Dorsolateral prefrontal cortex (tissue), 120 donors: ENCODE measurements at regions of chrX and their contacts with region 1.

Region 1: GRCh38 chrX:44025555-44025954 is 52.4 kb upstream of the NDP start:
- DNase-seq: no peak
- H3K4me3 ChIP-seq: no peak overlapping the region
- H3K27ac ChIP-seq: peak overlapping the region in 5 of 59 donors; percentile 16 to 38 (median 20)
- H3K27me3 ChIP-seq: peaks cover 0 to 62% (median 12%) of the 10 kb centered on the region in 45 donors
- CTCF ChIP-seq: no peak

Region 2: GRCh38 chrX:43969504-43970501 is 55.8 kb before region 1 on chrX:
- intact Hi-C with region 1: loop called (anchors 5 kb)
- DNase-seq: peak in 8 of 10 donors; percentile 20 to 61 (median 44)
- H3K4me3 ChIP-seq: peak overlapping the region in 51 of 59 donors; percentile 2 to 71 (median 31)
- H3K27ac ChIP-seq: peak overlapping the region; percentile 38 to 95 (median 88)
- H3K27me3 ChIP-seq: peaks cover 0 to 98% (median 39%) of the 10 kb centered on the region in 45 donors
- CTCF ChIP-seq: no peak

Region 3: GRCh38 chrX:44415639-44416386 is 390.3 kb after region 1 on chrX:
- intact Hi-C with region 1: no loop called
- DNase-seq: no peak
- H3K4me3 ChIP-seq: no peak overlapping the region
- H3K27ac ChIP-seq: no peak overlapping the region
- H3K27me3 ChIP-seq: peaks cover 0 to 70% (median 19%) of the 10 kb centered on the region in 45 donors
- CTCF ChIP-seq: no peak